ENCODE measurements at regions of chr1 and their contacts with region 1.

Region 1: GRCh38 chr1:112614460-112615065 is 4.4 kb downstream of the ST7L start:
- DNase-seq: peak in 1 of 4 experiments; percentile 57
- ATAC-seq: peak; percentile 43
- H3K4me3 ChIP-seq: no peak overlapping the region
- H3K27ac ChIP-seq: no peak overlapping the region
- H3K4me1 ChIP-seq: peaks cover 0 to 6% of the 10 kb centered on the region in 2 experiments; a peak in 2 of 5 replicates
- H3K27me3 ChIP-seq: no peaks in the 10 kb centered on the region
- CTCF ChIP-seq: peak; percentile 65 to 79 (median 68); a peak in 5 of 6 replicates
- EP300 ChIP-seq: no peak
- POLR2A ChIP-seq: no peak
- RAD21 ChIP-seq: peak; percentile 54 to 76

Region 2: DNA sequence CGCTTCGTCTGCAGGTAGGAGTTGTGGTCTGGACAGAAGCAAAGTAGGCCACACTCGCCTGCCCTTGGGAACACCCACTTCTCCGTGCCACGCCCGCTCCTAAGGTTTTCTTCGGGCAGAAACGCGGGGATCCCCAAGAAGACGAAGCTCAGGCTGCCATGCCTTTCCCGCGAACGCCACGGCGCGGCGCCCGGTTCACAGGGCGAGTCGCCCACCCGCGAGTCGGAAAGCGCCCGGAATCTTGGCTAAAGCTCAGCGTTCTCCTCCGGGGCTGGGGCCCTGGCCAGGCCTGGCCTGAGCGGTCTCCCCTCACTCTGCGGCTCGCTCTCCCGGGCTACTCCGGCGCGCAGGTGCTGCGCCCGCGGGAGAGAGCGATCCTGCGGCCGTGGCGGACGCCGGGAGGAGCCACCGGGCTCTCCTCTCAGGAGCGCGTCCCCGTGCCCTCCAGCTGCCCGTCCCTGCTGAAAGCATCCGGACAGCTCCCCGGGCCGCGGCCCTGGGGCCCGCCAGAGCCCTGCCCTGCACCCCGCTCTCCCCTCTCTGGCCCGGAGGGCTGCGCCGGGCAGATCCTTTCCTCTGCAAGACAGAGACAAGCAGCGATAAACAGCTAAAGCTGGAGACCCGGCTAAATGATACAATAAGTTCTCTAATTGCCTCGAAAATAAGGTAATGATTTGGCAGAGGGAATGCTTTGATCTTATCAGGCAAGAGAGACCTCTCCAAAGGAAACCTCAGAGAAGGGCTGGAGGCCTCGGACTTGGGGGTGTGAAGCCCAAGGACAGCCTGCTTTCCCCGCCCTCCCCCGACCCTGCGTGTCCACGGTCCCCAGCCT is 112.5 kb before region 1 on chr1:
- CTCF ChIA-PET with region 1: interaction called, 3 read pairs
- POLR2A ChIA-PET with region 1: interaction called, 4 read pairs
- in situ Hi-C with region 1: loop called (anchors 5 kb)
- intact Hi-C with region 1: loop called (anchors 2 kb)
- DNase-seq: peak; percentile 57 to 70 (median 60)
- ATAC-seq: peak; percentile 76
- H3K4me3 ChIP-seq: peak overlapping the region; percentile 35
- H3K27ac ChIP-seq: no peak overlapping the region
- H3K4me1 ChIP-seq: peaks cover 0 to 16% of the 10 kb centered on the region in 2 experiments; a peak in 2 of 5 replicates
- H3K27me3 ChIP-seq: peaks cover 36 to 73% of the 10 kb centered on the region in 2 experiments
- CTCF ChIP-seq: peak; percentile 68 to 76 (median 76)
- EP300 ChIP-seq: no peak
- POLR2A ChIP-seq: no peak
- RAD21 ChIP-seq: peak; percentile 56 to 84

Region 3: DNA sequence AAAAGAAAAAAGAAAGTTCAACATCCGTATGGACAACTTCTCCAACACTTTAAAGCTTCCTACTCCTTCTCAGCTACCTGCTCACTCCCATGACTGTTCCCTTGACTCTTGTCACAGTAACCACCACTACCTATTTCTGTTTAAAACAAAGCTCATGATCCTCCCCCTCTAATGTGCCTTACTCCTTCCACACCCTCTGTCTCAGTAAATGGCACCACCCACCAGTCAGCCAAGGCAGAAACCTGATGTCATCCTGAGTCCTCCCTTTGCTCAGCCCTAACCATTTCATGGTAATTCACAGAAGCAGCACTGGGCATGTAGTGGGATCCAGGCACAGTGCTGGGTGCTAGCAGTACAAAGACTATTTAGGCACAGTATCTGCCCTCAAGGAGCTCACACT is 163.6 kb after region 1 on chr1:
- CTCF ChIA-PET with region 1: no interaction called
- POLR2A ChIA-PET with region 1: no interaction called
- in situ Hi-C with region 1: no loop called
- intact Hi-C with region 1: no loop called
- DNase-seq: no peak
- ATAC-seq: peak; percentile 61
- H3K4me3 ChIP-seq: no peak overlapping the region
- H3K27ac ChIP-seq: no peak overlapping the region
- H3K4me1 ChIP-seq: no peaks in the 10 kb centered on the region
- H3K27me3 ChIP-seq: peaks cover 23 to 38% of the 10 kb centered on the region in 2 experiments
- CTCF ChIP-seq: no peak
- EP300 ChIP-seq: no peak
- POLR2A ChIP-seq: no peak
- RAD21 ChIP-seq: no peak